ENCODE measurements at regions of chr17 and their contacts with region 1.

Region 1: GRCh38 chr17:79741751-79742588 is 11.2 kb downstream of the ENPP7 start:
- H3K4me3 ChIP-seq: peak overlapping the region; percentile 42
- H3K27ac ChIP-seq: no peak overlapping the region; the same call in 1 of the 2 replicates
- H3K4me1 ChIP-seq: no peaks in the 10 kb centered on the region; the same call in 1 of the 2 replicates
- CTCF ChIP-seq: peak; percentile 93

Region 2: DNA sequence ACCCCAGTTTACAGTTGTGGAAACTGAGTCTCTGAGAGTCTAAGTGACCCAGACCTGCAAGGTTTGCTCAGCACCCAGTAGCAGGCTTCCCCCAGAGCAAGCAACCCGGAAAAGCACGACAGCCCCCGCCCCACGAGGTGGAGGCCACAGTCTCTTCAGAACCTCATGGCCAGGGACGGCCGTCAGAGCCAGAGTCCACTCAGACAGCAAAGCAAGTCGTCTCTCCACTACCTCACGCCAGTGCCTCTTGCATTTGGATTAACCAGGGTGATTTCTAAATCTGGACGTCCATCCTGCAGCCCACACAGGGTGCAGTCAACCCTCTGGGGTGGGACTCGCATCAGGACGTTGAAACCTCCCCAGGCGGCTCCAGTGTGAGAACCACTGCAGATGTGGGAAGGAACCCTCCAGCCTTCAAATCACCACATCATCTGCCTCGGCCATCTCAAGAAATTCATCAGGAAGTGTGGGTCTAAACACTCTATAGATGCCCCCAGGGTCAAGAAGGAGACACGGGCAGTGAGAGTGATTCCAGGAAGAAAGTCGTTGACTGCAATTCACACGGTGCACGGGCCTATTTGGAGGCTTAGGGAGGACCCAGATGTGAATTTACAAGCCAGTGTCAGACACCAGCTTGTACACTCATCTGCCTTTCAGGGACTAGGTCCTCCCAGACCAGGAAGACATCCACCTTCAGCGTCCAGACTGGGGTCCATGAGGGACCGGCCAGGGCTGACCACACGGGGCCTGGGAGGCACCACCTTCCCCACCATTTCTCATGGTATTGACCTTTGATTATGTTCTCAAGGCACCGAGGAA is 110.9 kb before region 1 on chr17:
- CTCF ChIA-PET with region 1: no interaction called
- POLR2A ChIA-PET with region 1: no interaction called
- H3K4me3 ChIP-seq: no peak overlapping the region
- H3K27ac ChIP-seq: no peak overlapping the region
- H3K4me1 ChIP-seq: no peaks in the 10 kb centered on the region
- CTCF ChIP-seq: no peak

Region 3: GRCh38 chr17:79651761-79652160 is 90.2 kb before region 1 on chr17:
- CTCF ChIA-PET with region 1: no interaction called
- POLR2A ChIA-PET with region 1: no interaction called
- H3K4me3 ChIP-seq: no peak overlapping the region
- H3K27ac ChIP-seq: no peak overlapping the region
- H3K4me1 ChIP-seq: no peaks in the 10 kb centered on the region
- CTCF ChIP-seq: no peak

Region 4: DNA sequence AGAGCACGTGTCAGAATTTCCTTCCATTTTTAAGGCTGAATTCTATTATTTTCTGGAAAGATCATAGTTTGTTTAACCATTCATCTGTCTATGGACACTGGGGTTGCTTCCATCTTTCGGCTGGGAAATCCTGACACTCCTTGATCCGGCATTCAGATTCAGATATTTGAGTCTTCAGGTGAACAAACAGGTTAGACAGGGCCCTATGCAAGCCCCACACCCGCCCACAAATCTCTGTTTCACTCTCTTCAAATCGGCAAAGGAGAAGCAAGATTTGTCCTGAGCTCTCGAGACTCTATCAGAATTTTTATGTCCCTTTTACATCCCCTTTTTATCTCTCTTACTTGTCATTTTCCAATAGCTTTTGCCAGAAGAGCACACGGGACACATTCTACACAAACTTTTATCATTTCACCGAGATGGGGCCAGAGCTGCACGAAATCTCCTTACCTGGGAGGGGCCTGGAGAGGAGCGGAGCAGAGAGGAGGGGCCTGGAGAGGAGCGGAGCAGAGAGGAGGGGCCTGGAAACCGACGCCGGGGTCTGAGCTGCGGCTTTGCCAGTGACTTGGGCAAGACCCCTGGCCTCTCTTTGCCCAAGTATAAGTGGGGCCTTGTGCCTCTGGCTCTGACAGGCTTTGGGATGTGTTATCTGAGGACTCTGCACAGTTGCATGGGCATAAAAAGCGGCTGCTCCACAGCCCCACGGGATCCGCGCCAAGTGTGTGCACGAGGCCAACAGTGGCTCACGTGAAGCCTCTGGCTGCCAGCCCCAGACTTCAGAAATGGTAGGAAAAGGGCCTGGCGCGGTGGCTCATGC is 76.8 kb before region 1 on chr17:
- CTCF ChIA-PET with region 1: no interaction called
- POLR2A ChIA-PET with region 1: no interaction called
- H3K4me3 ChIP-seq: no peak overlapping the region
- H3K27ac ChIP-seq: no peak overlapping the region
- H3K4me1 ChIP-seq: no peaks in the 10 kb centered on the region
- CTCF ChIP-seq: no peak

Region 5: GRCh38 chr17:79728226-79728907 is 13.6 kb before region 1 on chr17:
- CTCF ChIA-PET with region 1: interaction called, 31 read pairs
- POLR2A ChIA-PET with region 1: no interaction called
- H3K4me3 ChIP-seq: no peak overlapping the region
- H3K27ac ChIP-seq: no peak overlapping the region
- H3K4me1 ChIP-seq: no peaks in the 10 kb centered on the region
- CTCF ChIP-seq: no peak

Region 6: DNA sequence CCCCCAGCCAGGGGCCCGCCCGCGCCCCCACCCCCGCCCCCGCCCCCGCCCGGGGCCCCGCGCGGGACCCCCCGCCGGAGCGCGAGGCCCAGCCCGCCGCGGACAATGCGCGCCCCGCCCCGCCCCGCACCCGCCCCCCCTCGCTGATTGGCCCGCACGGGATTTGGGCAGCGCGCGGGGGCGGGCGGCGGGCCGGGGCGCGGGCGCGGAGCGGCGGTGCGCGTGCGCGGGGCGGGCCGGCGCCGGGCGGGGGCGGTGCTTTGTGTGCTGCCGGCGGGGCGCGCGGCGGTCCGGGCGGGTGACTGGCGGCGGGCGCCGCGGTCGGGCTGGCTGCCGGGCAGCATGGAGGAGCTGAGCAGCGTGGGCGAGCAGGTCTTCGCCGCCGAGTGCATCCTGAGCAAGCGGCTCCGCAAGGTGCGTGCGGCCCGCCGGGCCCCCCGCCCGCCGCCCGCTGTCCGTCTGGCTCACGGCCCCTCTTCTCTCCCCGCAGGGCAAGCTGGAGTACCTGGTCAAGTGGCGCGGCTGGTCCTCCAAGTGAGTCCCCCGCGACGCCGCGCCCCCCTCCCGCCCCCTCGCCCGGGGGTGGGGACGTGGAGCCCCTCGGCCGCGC is 36.0 kb after region 1 on chr17 and contains the start of gene CBX2:
- CTCF ChIA-PET with region 1: interaction called, 31 read pairs
- POLR2A ChIA-PET with region 1: interaction called, 4 read pairs
- H3K4me3 ChIP-seq: peak within 1 kb of the TSS; percentile 67
- H3K27ac ChIP-seq: peak within 1 kb of the TSS; percentile 85
- H3K4me1 ChIP-seq: peaks cover 21% of the 10 kb centered on the region
- CTCF ChIP-seq: no peak

Region 7: DNA sequence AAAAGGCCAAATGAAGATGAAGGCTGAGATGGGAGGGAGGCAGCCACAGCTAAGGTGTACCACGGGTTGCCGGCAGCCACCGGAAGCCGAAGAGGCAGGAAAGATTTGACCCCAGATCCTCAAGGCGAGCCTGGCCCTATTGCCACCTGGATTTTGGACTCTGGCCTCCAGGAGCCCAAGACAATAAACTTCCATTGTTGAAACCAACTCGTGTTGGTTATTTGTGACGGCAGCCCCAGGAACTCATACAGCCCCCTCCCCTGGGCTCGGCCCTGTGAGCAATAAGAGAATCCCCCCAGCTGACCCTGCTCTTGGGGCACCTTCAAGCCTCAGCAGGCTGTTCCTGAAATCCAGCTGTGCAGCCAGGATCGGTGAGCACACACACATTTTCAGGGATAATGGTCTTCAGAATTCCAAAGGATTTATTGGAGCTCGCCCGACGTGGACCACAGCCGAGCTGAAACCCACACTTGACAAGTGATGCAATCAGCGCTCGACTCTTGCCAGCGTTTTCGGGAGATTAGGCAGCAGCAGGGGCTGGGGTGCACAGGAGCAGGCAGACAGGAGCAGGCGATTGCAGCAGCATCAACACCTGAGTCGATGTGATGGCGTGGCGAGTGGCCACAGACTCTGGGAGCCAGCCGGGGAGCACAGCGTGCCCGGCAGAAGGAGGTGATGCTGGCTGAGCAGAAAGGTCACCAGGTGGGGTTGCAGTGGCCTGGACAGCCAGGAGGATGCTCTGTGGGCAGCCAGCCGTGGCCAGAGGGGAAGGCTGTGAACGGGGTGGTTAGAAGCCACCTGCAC is 119.6 kb after region 1 on chr17:
- CTCF ChIA-PET with region 1: no interaction called
- POLR2A ChIA-PET with region 1: no interaction called
- H3K4me3 ChIP-seq: no peak overlapping the region
- H3K27ac ChIP-seq: no peak overlapping the region
- H3K4me1 ChIP-seq: no peaks in the 10 kb centered on the region
- CTCF ChIP-seq: no peak

Region 8: GRCh38 chr17:79991140-79991923 is 249.4 kb after region 1 on chr17:
- CTCF ChIA-PET with region 1: interaction called, 28 read pairs
- POLR2A ChIA-PET with region 1: no interaction called
- H3K4me3 ChIP-seq: no peak overlapping the region
- H3K27ac ChIP-seq: peak overlapping the region; percentile 85; the same call in 1 of the 2 replicates
- H3K4me1 ChIP-seq: peaks cover 36% of the 10 kb centered on the region
- CTCF ChIP-seq: no peak

Measured in HEK293 (cell line).